ENCODE measurements at regions of chr22 and their contacts with region 1.

Region 1: GRCh38 chr22:27642104-27642800 is 159.3 kb downstream of the MN1 start:
- DNase-seq: no peak
- ATAC-seq: no peak
- H3K4me3 ChIP-seq: no peak overlapping the region
- H3K27ac ChIP-seq: peak overlapping the region in 1 of 12 donors; percentile 20
- H3K4me1 ChIP-seq: peaks cover 0 to 27% (median 7%) of the 10 kb centered on the region in 12 donors
- H3K27me3 ChIP-seq: no peaks in the 10 kb centered on the region
- CTCF ChIP-seq: no peak
- POLR2A ChIP-seq: no peak

Region 2: GRCh38 chr22:27474711-27475547 is 167.3 kb before region 1 on chr22:
- intact Hi-C with region 1: no loop called
- DNase-seq: no peak
- ATAC-seq: no peak
- H3K4me3 ChIP-seq: no peak overlapping the region
- H3K27ac ChIP-seq: no peak overlapping the region
- H3K4me1 ChIP-seq: peaks cover 0 to 8% (median 0%) of the 10 kb centered on the region in 12 donors
- H3K27me3 ChIP-seq: peaks cover 0 to 12% (median 0%) of the 10 kb centered on the region in 9 donors
- CTCF ChIP-seq: no peak
- POLR2A ChIP-seq: no peak

Region 3: GRCh38 chr22:27686534-27686933 is 44.3 kb after region 1 on chr22:
- intact Hi-C with region 1: loop called in 5 of 10 experiments (anchors 1 to 10 kb)
- DNase-seq: peak; percentile 85 to 94 (median 87)
- ATAC-seq: peak; percentile 93 to 98 (median 96)
- H3K4me3 ChIP-seq: no peak overlapping the region
- H3K27ac ChIP-seq: peak overlapping the region; percentile 70 to 95 (median 83)
- H3K4me1 ChIP-seq: peaks cover 0 to 28% (median 17%) of the 10 kb centered on the region in 12 donors
- H3K27me3 ChIP-seq: no peaks in the 10 kb centered on the region
- CTCF ChIP-seq: no peak
- POLR2A ChIP-seq: peak in 1 of 2 donors; percentile 25